Naive thymus-derived CD4-positive, alpha-beta T cell (primary cell): ENCODE measurements at regions of chr6 and their contacts with region 1.

Region 1: DNA sequence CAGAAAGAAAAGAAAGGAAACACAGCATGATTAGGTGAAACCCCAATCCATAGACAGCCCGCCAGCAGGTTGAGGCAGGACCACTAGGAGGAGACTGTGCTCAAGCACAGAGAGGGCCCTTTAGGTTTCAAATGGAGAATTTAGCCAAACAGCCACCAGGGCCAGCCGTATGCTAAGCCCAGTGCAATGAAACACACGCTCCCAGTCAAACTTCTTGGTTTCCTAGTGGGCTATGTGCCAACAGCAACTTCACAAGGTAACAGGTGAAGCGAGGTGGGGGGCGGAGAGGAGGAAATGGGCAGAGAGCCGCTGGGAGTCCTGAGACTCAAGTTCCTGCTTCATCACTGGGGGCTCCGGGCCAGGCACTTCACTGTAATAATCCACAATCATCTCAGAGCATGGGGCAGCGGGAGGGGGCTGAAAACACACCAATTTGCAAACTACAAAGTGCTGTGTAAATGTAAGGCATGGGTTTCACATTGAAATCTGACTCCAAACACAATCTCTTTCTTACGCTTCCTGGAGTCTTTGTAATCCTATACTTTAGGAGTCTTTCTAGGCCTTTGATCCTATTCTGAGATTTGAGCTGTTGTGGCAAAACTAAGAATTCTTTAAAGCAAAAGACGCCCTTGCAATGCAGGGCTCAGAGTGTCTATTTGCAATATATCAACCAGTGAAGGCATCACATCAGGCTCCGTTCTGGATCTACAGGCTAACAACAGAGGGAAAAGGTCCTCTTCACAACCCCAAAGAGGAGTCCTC is 117.3 kb downstream of the OPRM1 start:
- DNase-seq: peak; percentile 29 to 70 (median 58)
- ATAC-seq: peak; percentile 92
- H3K4me3 ChIP-seq: peak overlapping the region; percentile 57
- H3K4me3 Mint-ChIP-seq: peak overlapping the region; percentile 57 to 91 (median 81)
- H3K27ac ChIP-seq: peak overlapping the region; percentile 71
- H3K27ac Mint-ChIP-seq: peak overlapping the region; percentile 81 to 98 (median 92)
- H3K4me1 ChIP-seq: peaks cover 24 to 34% of the 10 kb centered on the region in 2 donors
- H3K4me1 Mint-ChIP-seq: peaks cover 29 to 84% (median 67%) of the 10 kb centered on the region in 7 donors
- H3K27me3 ChIP-seq: no peaks in the 10 kb centered on the region
- H3K27me3 Mint-ChIP-seq: peaks cover 0 to 2% (median 0%) of the 10 kb centered on the region in 5 donors

Region 2: DNA sequence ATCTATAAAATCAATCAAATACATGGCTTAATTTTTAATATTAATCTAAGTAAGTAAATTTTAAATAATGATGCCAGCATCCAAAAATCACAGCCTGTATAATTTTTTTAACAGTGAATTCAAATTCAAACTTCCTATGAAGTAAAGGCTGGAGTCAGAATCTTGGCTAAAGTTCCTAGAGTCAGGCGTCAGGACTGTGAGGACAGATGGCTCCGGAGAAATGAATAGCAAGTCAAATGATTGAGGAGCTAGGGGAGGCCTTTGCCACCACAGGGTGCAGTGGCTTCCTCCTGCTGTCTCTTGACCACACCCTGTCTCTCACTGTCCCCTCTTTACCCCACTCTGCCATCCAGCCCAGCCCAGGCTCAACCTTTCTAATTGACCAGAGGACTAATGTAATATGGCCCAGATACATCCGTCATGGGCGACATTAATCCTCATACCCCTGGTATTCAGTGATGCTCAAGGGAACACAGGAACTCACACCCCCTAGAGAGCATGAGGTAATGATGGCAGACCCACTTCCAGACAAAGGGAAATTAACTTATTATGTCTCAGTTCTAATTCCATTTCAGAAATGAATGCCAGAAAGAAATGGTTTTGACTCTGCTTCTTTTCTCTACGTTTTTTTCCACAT is 63.9 kb before region 1 on chr6:
- CTCF ChIA-PET with region 1: no interaction called
- POLR2A ChIA-PET with region 1: no interaction called
- intact Hi-C with region 1: no loop called
- DNase-seq: no peak
- ATAC-seq: no peak
- H3K4me3 ChIP-seq: no peak overlapping the region
- H3K4me3 Mint-ChIP-seq: no peak overlapping the region
- H3K27ac ChIP-seq: no peak overlapping the region
- H3K27ac Mint-ChIP-seq: no peak overlapping the region
- H3K4me1 ChIP-seq: no peaks in the 10 kb centered on the region
- H3K4me1 Mint-ChIP-seq: peaks cover 0 to 1% (median 0%) of the 10 kb centered on the region in 7 donors
- H3K27me3 ChIP-seq: no peaks in the 10 kb centered on the region
- H3K27me3 Mint-ChIP-seq: peaks cover 0 to 20% (median 6%) of the 10 kb centered on the region in 5 donors

Region 3: DNA sequence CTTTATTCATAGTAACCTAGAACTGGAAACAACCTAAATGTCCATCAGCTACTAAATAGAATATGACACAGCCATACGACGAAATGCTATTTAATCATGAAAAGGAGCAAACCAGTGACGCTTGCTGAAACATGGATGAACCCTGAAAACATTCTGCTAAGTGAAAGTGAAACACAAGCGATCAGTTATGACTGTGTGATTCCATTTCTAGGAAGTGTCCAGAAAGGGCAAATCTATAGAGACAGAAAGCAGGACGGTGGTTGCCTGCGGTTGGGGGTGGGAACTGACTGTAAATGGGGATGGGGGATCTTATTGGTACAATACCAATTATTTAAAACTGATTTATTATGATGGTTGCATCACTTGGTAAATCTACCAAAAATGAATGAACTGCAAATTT is 73.5 kb after region 1 on chr6:
- CTCF ChIA-PET with region 1: interaction called, 3 read pairs
- POLR2A ChIA-PET with region 1: no interaction called
- intact Hi-C with region 1: loop called in 1 of 2 experiments (anchors 1 kb)
- DNase-seq: peak in 2 of 9 donors; percentile 41 to 56
- ATAC-seq: peak; percentile 64
- H3K4me3 ChIP-seq: peak overlapping the region; percentile 30
- H3K4me3 Mint-ChIP-seq: peak overlapping the region; percentile 75 to 89 (median 78)
- H3K27ac ChIP-seq: peak overlapping the region; percentile 41
- H3K27ac Mint-ChIP-seq: peak overlapping the region; percentile 66 to 94 (median 86)
- H3K4me1 ChIP-seq: peaks cover 32 to 63% of the 10 kb centered on the region in 2 donors
- H3K4me1 Mint-ChIP-seq: peaks cover 55 to 91% (median 87%) of the 10 kb centered on the region in 7 donors
- H3K27me3 ChIP-seq: no peaks in the 10 kb centered on the region
- H3K27me3 Mint-ChIP-seq: no peaks in the 10 kb centered on the region

Region 4: GRCh38 chr6:154370545-154370944 is 214.2 kb after region 1 on chr6:
- CTCF ChIA-PET with region 1: interaction called, 11 read pairs
- POLR2A ChIA-PET with region 1: interaction called, 4 read pairs
- intact Hi-C with region 1: loop called (anchors 1 kb)
- DNase-seq: peak in 6 of 9 donors; percentile 13 to 37 (median 24)
- ATAC-seq: peak; percentile 58
- H3K4me3 ChIP-seq: no peak overlapping the region
- H3K4me3 Mint-ChIP-seq: peak overlapping the region in 1 of 10 donors; percentile 24
- H3K27ac ChIP-seq: no peak overlapping the region
- H3K27ac Mint-ChIP-seq: peak overlapping the region in 2 of 9 donors; percentile 20 to 63
- H3K4me1 ChIP-seq: no peaks in the 10 kb centered on the region
- H3K4me1 Mint-ChIP-seq: peaks cover 0 to 20% (median 11%) of the 10 kb centered on the region in 7 donors
- H3K27me3 ChIP-seq: no peaks in the 10 kb centered on the region
- H3K27me3 Mint-ChIP-seq: peaks cover 0 to 3% (median 0%) of the 10 kb centered on the region in 5 donors

Region 5: DNA sequence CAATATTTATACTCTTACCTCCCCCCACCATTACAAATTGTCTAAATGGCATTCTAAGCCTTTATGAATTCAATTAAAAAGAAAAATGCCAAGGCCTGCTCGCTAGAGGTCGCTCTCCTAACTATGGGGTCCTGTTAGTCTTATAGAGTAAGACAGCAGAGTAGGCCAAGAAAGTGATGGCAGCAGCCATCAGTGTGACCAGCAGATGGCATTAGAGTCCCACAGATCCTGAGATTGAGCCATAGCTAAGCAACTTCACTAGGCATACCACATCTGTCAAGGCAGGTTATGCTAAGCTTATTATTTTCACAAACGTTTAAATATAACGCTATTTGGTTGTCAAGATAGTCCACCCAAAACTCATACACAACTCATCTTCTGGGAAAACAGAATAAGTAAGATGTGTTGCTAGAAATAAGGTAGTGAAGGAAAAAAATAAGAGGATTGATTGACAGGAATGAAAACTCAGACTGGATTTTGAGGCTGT is 519.3 kb after region 1 on chr6:
- CTCF ChIA-PET with region 1: interaction called, 6 read pairs
- POLR2A ChIA-PET with region 1: no interaction called
- intact Hi-C with region 1: loop called (anchors 1 to 5 kb)
- DNase-seq: peak; percentile 60 to 89 (median 86)
- ATAC-seq: peak; percentile 100
- H3K4me3 ChIP-seq: no peak overlapping the region
- H3K4me3 Mint-ChIP-seq: no peak overlapping the region
- H3K27ac ChIP-seq: no peak overlapping the region
- H3K27ac Mint-ChIP-seq: no peak overlapping the region
- H3K4me1 ChIP-seq: no peaks in the 10 kb centered on the region
- H3K4me1 Mint-ChIP-seq: no peaks in the 10 kb centered on the region
- H3K27me3 ChIP-seq: no peaks in the 10 kb centered on the region
- H3K27me3 Mint-ChIP-seq: peaks cover 0 to 3% (median 0%) of the 10 kb centered on the region in 5 donors

Region 6: DNA sequence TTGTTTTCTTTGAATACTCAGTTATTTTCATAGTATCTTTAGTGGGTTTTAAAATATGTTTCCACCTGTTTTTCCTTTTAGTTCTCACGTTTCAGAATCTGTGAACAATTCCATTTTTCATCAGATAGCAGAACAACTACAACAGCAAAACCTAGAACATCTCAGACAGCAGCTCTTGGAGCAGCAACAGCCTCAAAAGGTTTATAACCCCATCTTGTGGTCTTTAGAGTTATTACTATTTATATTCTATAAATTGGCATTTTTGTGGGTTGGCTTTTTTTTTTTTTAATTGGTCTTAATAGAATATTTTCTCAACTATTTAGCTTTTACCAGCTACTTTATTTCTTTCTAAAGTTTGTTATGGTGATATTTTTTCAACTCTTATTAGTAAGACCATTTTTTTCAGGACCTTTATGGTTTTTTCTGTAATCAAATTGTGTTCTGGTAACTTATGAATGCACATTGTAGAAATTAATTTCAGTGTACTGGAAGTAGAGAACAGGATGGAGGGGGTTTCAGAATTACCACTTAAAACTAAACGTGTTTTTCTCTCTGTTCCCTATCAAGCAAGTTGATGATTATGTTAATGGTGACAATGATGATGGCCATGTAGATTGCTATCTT is 649.1 kb after region 1 on chr6:
- CTCF ChIA-PET with region 1: no interaction called
- POLR2A ChIA-PET with region 1: no interaction called
- intact Hi-C with region 1: loop called in 1 of 2 experiments (anchors 2 kb)
- DNase-seq: peak in 7 of 9 donors; percentile 16 to 59 (median 44)
- ATAC-seq: peak; percentile 80
- H3K4me3 ChIP-seq: no peak overlapping the region
- H3K4me3 Mint-ChIP-seq: no peak overlapping the region
- H3K27ac ChIP-seq: no peak overlapping the region
- H3K27ac Mint-ChIP-seq: peak overlapping the region in 3 of 9 donors; percentile 26 to 66 (median 48)
- H3K4me1 ChIP-seq: no peaks in the 10 kb centered on the region
- H3K4me1 Mint-ChIP-seq: peaks cover 1 to 8% (median 5%) of the 10 kb centered on the region in 7 donors
- H3K27me3 ChIP-seq: no peaks in the 10 kb centered on the region
- H3K27me3 Mint-ChIP-seq: no peaks in the 10 kb centered on the region